ENCODE measurements at regions of chr1 and their contacts with region 1.

Region 1: GRCh38 chr1:50930193-50930592 is 29.9 kb downstream of the FAF1 start:
- DNase-seq: no peak
- H3K4me3 ChIP-seq: no peak overlapping the region
- H3K27ac ChIP-seq: no peak overlapping the region
- H3K4me1 ChIP-seq: peaks cover 0 to 8% (median 2%) of the 10 kb centered on the region in 4 donors
- H3K27me3 ChIP-seq: no peaks in the 10 kb centered on the region
- CTCF ChIP-seq: no peak

Region 2: DNA sequence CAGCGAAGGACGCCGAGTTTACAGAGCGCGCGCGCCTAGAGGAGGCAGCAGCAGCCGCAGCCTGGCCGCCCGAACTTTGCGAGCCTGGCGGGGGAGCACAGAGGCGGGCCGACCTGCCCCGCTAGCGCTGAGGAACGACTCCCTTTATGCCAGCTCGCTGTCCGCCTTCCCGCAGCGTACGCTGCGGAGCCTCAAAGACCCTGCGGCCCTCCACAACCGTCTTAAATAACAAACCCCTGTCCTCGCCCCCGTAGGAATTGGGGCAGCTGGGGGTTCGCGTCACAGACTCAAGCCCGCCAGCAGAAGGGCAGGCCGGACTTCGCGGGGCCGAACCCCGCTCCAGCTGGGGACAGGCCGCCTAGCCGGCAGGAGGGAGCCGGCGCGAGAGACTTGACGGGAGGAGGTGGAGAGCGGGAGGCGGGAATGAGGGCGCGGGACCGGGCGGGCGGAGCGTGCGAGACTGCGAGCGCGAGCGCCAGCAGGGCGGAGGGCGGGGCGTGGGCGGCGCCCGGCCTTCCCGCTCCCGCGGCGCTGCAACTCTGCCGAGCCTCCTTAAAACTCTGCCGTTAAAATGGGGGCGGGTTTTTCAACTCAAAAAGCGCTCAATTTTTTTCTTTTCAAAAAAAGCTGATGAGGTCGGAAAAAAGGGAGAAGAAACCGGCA is 38.1 kb after region 1 on chr1:
- intact Hi-C with region 1: no loop called
- DNase-seq: peak; percentile 90 to 97
- H3K4me3 ChIP-seq: peak overlapping the region; percentile 96 to 98
- H3K27ac ChIP-seq: peak overlapping the region; percentile 99 to 100
- H3K4me1 ChIP-seq: peaks cover 0 to 13% (median 0%) of the 10 kb centered on the region in 4 donors
- H3K27me3 ChIP-seq: no peaks in the 10 kb centered on the region
- CTCF ChIP-seq: peak; percentile 49 to 62

Region 3: GRCh38 chr1:51032902-51033301 is 102.7 kb after region 1 on chr1:
- intact Hi-C with region 1: loop called (anchors 10 kb)
- DNase-seq: no peak
- H3K4me3 ChIP-seq: no peak overlapping the region
- H3K27ac ChIP-seq: no peak overlapping the region
- H3K4me1 ChIP-seq: no peaks in the 10 kb centered on the region
- H3K27me3 ChIP-seq: no peaks in the 10 kb centered on the region
- CTCF ChIP-seq: no peak

Region 4: GRCh38 chr1:51139474-51139873 is 209.3 kb after region 1 on chr1:
- intact Hi-C with region 1: no loop called
- DNase-seq: no peak
- H3K4me3 ChIP-seq: no peak overlapping the region
- H3K27ac ChIP-seq: no peak overlapping the region
- H3K4me1 ChIP-seq: no peaks in the 10 kb centered on the region
- H3K27me3 ChIP-seq: no peaks in the 10 kb centered on the region
- CTCF ChIP-seq: no peak